ENCODE measurements at regions of chr18 and their contacts with region 1.

Region 1: GRCh38 chr18:58838165-58838860 is 26.4 kb upstream of the ZNF532 start:
- DNase-seq: no peak
- ATAC-seq: no peak
- H3K4me3 ChIP-seq: no peak overlapping the region
- H3K4me3 Mint-ChIP-seq: no peak overlapping the region
- H3K27ac ChIP-seq: no peak overlapping the region
- H3K27ac Mint-ChIP-seq: no peak overlapping the region
- H3K4me1 ChIP-seq: no peaks in the 10 kb centered on the region
- H3K4me1 Mint-ChIP-seq: no peaks in the 10 kb centered on the region
- H3K27me3 ChIP-seq: peaks cover 0 to 14% of the 10 kb centered on the region in 2 experiments
- H3K27me3 Mint-ChIP-seq: peaks cover 12 to 19% of the 10 kb centered on the region in 2 donors

Region 2: GRCh38 chr18:58878640-58879039 is 40.3 kb after region 1 on chr18:
- CTCF ChIA-PET with region 1: interaction called in 1 of 2 experiments, 10 read pairs
- POLR2A ChIA-PET with region 1: no interaction called
- DNase-seq: no peak
- ATAC-seq: no peak
- H3K4me3 ChIP-seq: no peak overlapping the region
- H3K4me3 Mint-ChIP-seq: no peak overlapping the region
- H3K27ac ChIP-seq: no peak overlapping the region
- H3K27ac Mint-ChIP-seq: no peak overlapping the region
- H3K4me1 ChIP-seq: no peaks in the 10 kb centered on the region
- H3K4me1 Mint-ChIP-seq: no peaks in the 10 kb centered on the region
- H3K27me3 ChIP-seq: peaks cover 0 to 6% of the 10 kb centered on the region in 2 experiments
- H3K27me3 Mint-ChIP-seq: peaks cover 17 to 32% of the 10 kb centered on the region in 2 donors